ENCODE measurements at regions of chr12 and their contacts with region 1.

Region 1: DNA sequence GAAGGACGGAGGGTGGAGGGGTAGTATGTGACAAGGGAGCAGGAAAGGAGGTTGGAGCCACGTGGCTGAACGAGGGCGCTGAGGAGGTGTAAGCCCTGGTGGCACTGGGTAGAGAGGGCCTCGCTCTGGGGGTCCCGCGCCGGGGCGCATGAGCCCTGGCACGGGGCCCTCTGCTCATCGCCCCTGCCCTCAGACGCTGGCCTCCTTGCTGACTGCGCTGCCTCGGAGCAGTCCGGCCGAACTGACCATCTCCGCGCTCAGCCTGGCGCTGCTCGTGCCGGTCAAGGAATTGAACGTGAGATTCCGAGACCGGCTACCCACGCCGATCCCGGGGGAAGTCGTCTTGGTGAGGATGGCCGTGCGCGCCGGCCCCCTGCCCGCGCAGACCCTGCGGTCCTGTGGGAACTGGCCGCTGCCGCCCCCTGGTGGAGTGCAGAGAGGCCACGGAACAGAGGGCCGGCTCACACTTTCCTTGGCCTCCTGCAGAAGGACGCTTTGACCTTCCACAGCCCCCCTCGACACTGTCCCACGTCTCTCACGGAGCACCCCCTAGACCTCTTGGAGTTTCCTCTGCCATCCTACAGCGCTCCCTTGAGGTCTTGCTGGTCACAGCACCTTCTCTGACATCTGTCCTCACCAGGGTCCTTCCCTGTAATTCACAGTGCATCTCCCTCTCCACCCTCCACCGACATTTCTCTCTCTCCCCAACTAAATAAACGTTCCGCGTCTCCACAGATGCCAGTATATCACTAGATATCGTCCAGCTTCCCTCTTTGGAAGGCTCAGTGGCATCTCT is 10.5 kb downstream of the ARHGEF25 start:
- DNase-seq: peak; percentile 73
- H3K4me3 Mint-ChIP-seq: peak overlapping the region; percentile 59
- H3K27ac Mint-ChIP-seq: peak overlapping the region; percentile 50
- H3K4me1 Mint-ChIP-seq: peaks cover 30% of the 10 kb centered on the region
- H3K27me3 Mint-ChIP-seq: peaks cover 100% of the 10 kb centered on the region

Region 2: GRCh38 chr12:57590536-57591479 is 30.9 kb before region 1 on chr12 and contains the start of gene PIP4K2C:
- CTCF ChIA-PET with region 1: interaction called, 143 read pairs
- DNase-seq: peak; percentile 89
- H3K4me3 Mint-ChIP-seq: peak within 1 kb of the TSS; percentile 83
- H3K27ac Mint-ChIP-seq: peak within 1 kb of the TSS; percentile 73
- H3K4me1 Mint-ChIP-seq: peaks cover 25% of the 10 kb centered on the region
- H3K27me3 Mint-ChIP-seq: no peaks in the 10 kb centered on the region

Region 3: DNA sequence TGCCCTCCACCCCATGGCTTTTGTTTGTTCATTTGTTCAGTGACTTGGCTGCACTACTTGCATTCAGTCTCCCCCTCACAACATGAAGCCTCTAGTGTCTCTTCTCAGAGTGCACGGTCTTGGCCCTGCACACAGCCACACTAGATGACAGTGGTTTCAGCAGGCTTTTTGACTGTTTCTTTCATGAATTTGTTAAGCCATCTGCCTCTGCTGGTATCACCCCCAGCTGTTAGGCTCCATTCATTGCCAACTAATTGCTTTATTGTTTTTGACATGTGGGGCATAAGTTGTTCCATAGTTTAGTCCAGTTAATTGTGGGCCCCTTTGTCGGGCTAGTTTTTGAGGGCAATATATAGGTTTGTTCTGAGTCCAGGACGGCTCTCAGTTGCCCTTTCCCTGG is 91.0 kb after region 1 on chr12:
- CTCF ChIA-PET with region 1: no interaction called
- DNase-seq: no peak
- H3K4me3 Mint-ChIP-seq: no peak overlapping the region
- H3K27ac Mint-ChIP-seq: no peak overlapping the region
- H3K4me1 Mint-ChIP-seq: peaks cover 6% of the 10 kb centered on the region
- H3K27me3 Mint-ChIP-seq: no peaks in the 10 kb centered on the region

Measured in activated naive CD4-positive, alpha-beta T cell treated with anti-CD3 and anti-CD28 coated beads, Interleukin-2, amount 10 ng/mL, durations not matched to agents 7 days and 5 days (primary cell).